ENCODE measurements at regions of chr6 and their contacts with region 1.

Region 1: DNA sequence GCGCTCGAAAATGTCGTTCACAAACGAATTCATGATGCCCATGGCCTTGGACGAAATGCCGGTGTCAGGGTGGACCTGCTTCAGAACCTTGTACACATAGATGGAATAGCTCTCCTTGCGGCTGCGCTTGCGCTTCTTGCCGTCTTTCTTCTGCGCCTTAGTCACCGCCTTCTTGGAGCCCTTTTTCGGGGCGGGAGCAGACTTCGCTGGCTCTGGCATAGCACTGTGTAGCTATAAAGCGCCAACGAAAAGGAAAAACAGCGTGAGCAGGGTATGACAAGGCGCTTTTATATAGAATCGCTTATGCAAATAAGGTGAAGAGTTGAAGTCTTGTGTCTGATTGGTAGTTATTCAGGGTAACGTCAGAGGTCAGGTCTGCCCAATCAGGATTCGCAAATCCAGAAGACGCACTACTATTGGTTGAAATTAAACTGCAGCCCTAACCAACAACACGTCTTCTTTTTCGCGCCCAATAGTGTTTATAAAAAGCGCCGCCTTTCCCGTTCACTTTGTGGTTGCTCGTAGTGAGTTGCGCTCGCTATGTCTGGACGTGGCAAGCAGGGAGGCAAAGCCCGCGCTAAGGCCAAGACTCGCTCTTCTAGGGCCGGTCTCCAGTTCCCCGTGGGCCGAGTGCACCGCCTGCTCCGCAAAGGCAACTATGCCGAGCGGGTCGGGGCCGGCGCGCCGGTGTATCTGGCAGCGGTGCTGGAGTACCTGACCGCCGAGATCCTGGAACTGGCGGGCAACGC is 114.8 kb upstream of the PRSS16 start:
- DNase-seq: peak; percentile 93
- ATAC-seq: peak; percentile 82
- H3K4me3 Mint-ChIP-seq: no peak overlapping the region
- H3K27ac Mint-ChIP-seq: no peak overlapping the region
- H3K4me1 Mint-ChIP-seq: peaks cover 18% of the 10 kb centered on the region
- H3K27me3 Mint-ChIP-seq: no peaks in the 10 kb centered on the region
- CTCF ChIP-seq: no peak

Region 2: GRCh38 chr6:26031595-26032339 is 1100.9 kb before region 1 on chr6:
- CTCF ChIA-PET with region 1: no interaction called
- POLR2A ChIA-PET with region 1: interaction called, 7 read pairs
- intact Hi-C with region 1: loop called (anchors 10 kb)
- DNase-seq: peak; percentile 95
- ATAC-seq: peak; percentile 66
- H3K4me3 Mint-ChIP-seq: peak overlapping the region; percentile 91
- H3K27ac Mint-ChIP-seq: peak overlapping the region; percentile 98
- H3K4me1 Mint-ChIP-seq: peaks cover 50% of the 10 kb centered on the region
- H3K27me3 Mint-ChIP-seq: peaks cover 3% of the 10 kb centered on the region
- CTCF ChIP-seq: no peak

Region 3: GRCh38 chr6:26216356-26216885 is 916.3 kb before region 1 on chr6:
- CTCF ChIA-PET with region 1: no interaction called
- POLR2A ChIA-PET with region 1: interaction called, 21 read pairs
- intact Hi-C with region 1: no loop called
- DNase-seq: peak; percentile 87
- ATAC-seq: peak; percentile 80
- H3K4me3 Mint-ChIP-seq: no peak overlapping the region
- H3K27ac Mint-ChIP-seq: no peak overlapping the region
- H3K4me1 Mint-ChIP-seq: peaks cover 11% of the 10 kb centered on the region
- H3K27me3 Mint-ChIP-seq: no peaks in the 10 kb centered on the region
- CTCF ChIP-seq: no peak

Region 4: DNA sequence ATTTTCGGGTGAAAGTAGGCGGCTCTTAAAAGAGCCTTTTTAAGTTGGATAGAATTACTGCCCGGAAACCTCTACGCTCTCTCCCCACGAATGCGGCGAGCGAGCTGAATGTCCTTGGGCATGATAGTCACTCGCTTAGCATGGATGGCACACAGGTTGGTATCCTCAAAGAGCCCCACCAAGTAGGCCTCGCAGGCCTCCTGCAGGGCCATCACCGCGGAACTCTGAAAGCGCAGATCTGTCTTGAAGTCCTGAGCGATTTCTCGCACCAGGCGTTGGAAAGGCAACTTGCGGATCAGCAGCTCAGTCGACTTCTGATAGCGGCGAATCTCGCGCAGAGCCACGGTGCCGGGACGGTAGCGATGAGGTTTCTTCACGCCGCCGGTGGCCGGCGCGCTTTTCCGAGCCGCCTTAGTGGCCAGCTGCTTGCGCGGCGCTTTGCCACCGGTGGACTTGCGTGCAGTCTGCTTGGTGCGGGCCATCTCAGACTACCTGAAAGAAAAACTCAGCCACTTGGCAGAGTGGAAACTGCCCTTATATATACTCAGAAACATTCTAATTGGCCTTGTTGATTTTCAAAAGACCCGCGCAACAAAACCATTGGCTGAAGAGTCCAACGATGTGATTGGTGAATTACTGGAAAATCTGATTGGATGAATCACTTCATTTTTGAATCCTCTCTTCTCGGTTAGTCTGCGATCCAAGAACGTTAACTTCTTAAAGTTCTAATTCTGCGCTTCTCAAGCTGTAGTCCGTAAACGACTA is 861.6 kb before region 1 on chr6:
- CTCF ChIA-PET with region 1: no interaction called
- POLR2A ChIA-PET with region 1: interaction called, 46 read pairs
- intact Hi-C with region 1: no loop called
- DNase-seq: peak; percentile 87
- ATAC-seq: peak; percentile 43
- H3K4me3 Mint-ChIP-seq: no peak overlapping the region
- H3K27ac Mint-ChIP-seq: no peak overlapping the region
- H3K4me1 Mint-ChIP-seq: peaks cover 18% of the 10 kb centered on the region
- H3K27me3 Mint-ChIP-seq: no peaks in the 10 kb centered on the region
- CTCF ChIP-seq: no peak

Region 5: DNA sequence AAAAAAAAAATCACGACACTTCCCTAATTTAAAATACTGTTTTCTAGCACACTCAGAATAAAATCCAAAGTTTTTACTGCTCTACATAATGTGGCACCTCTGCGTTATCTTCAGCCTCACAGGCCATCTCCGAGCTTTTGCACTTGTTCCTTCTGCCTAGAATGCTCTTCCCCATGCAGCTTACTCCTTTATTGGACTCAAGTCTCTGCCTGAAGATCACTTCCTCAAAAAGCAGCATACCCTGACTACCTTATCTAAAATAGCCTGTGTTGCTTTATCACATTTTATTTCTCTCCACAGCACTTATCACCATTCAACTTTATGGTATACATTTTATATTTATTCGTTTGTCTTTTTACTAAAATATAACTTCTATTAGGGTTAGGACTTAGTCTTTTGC is 475.4 kb before region 1 on chr6:
- CTCF ChIA-PET with region 1: no interaction called
- POLR2A ChIA-PET with region 1: no interaction called
- intact Hi-C with region 1: no loop called
- DNase-seq: no peak
- ATAC-seq: no peak
- H3K4me3 Mint-ChIP-seq: no peak overlapping the region
- H3K27ac Mint-ChIP-seq: no peak overlapping the region
- H3K4me1 Mint-ChIP-seq: peaks cover 30% of the 10 kb centered on the region
- H3K27me3 Mint-ChIP-seq: peaks cover 7% of the 10 kb centered on the region
- CTCF ChIP-seq: no peak

Region 6: DNA sequence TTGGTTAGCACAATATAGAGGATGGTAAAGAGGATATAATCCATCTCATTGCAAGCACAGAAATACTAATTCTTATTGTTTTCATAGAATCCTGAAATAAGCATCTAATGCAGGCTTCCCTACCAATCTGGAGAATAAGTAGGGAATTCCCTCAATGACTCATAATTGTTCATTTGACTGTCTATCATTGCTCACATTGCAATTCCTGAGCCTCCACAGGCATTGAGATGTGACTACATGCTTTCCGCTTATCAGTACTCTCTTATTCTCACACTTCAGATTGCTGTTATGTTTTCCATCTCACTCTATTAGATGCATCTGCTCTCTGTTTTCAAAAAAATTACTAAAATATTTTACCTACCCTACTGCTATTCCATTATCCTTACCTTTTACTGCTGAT is 101.4 kb before region 1 on chr6:
- CTCF ChIA-PET with region 1: no interaction called
- POLR2A ChIA-PET with region 1: no interaction called
- intact Hi-C with region 1: no loop called
- DNase-seq: no peak
- ATAC-seq: no peak
- H3K4me3 Mint-ChIP-seq: no peak overlapping the region
- H3K27ac Mint-ChIP-seq: no peak overlapping the region
- H3K4me1 Mint-ChIP-seq: no peaks in the 10 kb centered on the region
- H3K27me3 Mint-ChIP-seq: peaks cover 41% of the 10 kb centered on the region
- CTCF ChIP-seq: no peak

Region 7: DNA sequence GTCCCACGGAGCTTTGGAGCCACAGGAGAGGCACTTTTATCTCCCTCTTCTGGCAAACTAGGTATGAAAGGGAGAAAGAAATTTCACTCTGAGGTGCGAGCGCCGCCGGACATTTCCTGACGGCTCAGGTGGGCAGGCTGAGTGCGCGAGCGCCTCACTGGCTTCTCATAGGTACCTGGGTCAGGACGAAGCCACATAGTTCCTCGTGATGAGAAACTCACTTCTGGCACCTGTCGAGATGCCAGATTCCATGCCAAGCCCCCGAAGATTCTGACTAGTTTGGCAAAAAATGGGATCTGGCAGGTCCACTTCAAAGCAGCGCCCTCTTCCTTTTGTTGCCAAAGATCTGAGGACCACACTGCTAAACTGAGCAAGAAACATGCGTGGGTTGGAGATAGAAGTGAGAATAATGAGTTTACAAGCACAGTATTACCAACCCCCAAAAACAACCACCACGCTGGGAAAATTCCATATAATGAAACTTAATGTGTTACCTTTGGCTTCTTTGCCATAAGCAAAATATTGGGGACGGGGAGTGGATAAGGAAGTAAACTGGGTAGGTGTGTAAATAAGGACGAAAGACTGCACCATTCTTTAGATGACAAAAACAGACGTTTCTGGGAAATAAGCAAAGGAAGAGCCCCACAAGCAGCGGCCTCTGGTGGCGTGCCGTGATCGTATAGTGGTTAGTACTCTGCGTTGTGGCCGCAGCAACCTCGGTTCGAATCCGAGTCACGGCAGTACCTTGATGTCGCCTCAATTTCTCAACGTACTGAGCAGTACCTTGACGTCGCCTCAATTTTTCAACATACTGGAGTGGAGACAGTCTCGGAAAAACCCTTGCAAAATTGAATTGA is 25.0 kb after region 1 on chr6:
- CTCF ChIA-PET with region 1: interaction called, 13 read pairs
- POLR2A ChIA-PET with region 1: interaction called, 692 read pairs
- intact Hi-C with region 1: no loop called
- DNase-seq: peak; percentile 92
- ATAC-seq: peak; percentile 80
- H3K4me3 Mint-ChIP-seq: peak overlapping the region; percentile 76
- H3K27ac Mint-ChIP-seq: peak overlapping the region; percentile 77
- H3K4me1 Mint-ChIP-seq: peaks cover 47% of the 10 kb centered on the region
- H3K27me3 Mint-ChIP-seq: no peaks in the 10 kb centered on the region
- CTCF ChIP-seq: peak; percentile 36

Region 8: GRCh38 chr6:27838058-27838944 is 705.6 kb after region 1 on chr6:
- CTCF ChIA-PET with region 1: no interaction called
- POLR2A ChIA-PET with region 1: interaction called, 26 read pairs
- intact Hi-C with region 1: no loop called
- DNase-seq: peak; percentile 87
- ATAC-seq: peak; percentile 73
- H3K4me3 Mint-ChIP-seq: no peak overlapping the region
- H3K27ac Mint-ChIP-seq: no peak overlapping the region
- H3K4me1 Mint-ChIP-seq: peaks cover 20% of the 10 kb centered on the region
- H3K27me3 Mint-ChIP-seq: no peaks in the 10 kb centered on the region
- CTCF ChIP-seq: no peak

Region 9: GRCh38 chr6:27893059-27893835 is 760.5 kb after region 1 on chr6:
- CTCF ChIA-PET with region 1: interaction called, 4 read pairs
- POLR2A ChIA-PET with region 1: interaction called, 34 read pairs
- intact Hi-C with region 1: no loop called
- DNase-seq: peak; percentile 92
- ATAC-seq: peak; percentile 63
- H3K4me3 Mint-ChIP-seq: no peak overlapping the region
- H3K27ac Mint-ChIP-seq: no peak overlapping the region
- H3K4me1 Mint-ChIP-seq: peaks cover 28% of the 10 kb centered on the region
- H3K27me3 Mint-ChIP-seq: no peaks in the 10 kb centered on the region
- CTCF ChIP-seq: no peak

Measured in activated CD8-positive, alpha-beta T cell treated with anti-CD3 and anti-CD28 coated beads for 36 hours (primary cell).